PC-3 (cell line): ENCODE measurements at regions of chr2 and their contacts with region 1.

Region 1: GRCh38 chr2:148721520-148721931 is 77.0 kb downstream of the EPC2 start:
- DNase-seq: no peak
- ATAC-seq: no peak
- H3K4me3 ChIP-seq: no peak overlapping the region
- H3K27ac ChIP-seq: no peak overlapping the region
- H3K4me1 ChIP-seq: no peaks in the 10 kb centered on the region; the same call in 1 of the 2 replicates
- H3K27me3 ChIP-seq: no peaks in the 10 kb centered on the region
- CTCF ChIP-seq: no peak

Region 2: DNA sequence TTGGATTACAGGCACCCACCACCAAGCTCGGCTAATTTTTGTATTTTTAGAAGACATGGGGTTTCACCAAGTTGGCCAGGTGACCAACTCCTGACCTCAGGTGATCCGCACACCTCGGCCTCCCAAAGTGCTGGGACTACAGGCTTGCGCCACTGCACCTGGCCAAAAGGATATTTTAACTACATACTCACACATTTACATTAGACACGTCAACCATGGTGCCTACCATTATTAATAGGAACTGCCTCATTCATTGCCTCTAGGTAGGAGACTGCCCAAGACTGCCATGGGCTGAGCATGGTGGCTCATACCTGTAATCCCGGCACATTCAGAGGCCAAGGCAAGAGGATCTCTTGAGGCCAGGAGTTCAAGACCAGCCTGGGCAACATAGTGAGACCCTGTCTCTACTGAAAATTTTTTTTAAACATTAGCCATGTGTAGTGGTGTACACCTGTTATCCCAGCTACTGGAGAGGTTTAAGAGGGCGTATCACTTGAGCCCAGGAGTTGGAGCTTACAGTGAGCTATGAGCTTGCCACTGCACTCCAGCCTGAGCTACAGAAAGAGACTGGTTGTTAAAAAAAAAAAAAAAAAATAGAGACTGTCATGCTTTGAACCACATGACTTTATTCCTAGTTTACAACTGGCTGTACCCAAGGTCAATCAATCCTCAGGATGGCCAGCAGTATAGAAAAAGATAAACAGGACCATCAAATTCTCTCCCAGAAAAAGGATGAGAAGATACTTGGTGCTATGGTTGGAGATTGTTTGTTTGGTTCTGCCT is 108.1 kb before region 1 on chr2:
- CTCF ChIA-PET with region 1: no interaction called
- POLR2A ChIA-PET with region 1: interaction called, 13 read pairs
- intact Hi-C with region 1: no loop called
- DNase-seq: no peak
- ATAC-seq: no peak
- H3K4me3 ChIP-seq: no peak overlapping the region
- H3K27ac ChIP-seq: no peak overlapping the region
- H3K4me1 ChIP-seq: peaks cover 24% of the 10 kb centered on the region
- H3K27me3 ChIP-seq: no peaks in the 10 kb centered on the region
- CTCF ChIP-seq: no peak